Activated naive CD4-positive, alpha-beta T cell treated with anti-CD3 and anti-CD28 coated beads for 36 hours (primary cell): ENCODE measurements at regions of chr11 and their contacts with region 1.

Region 1: DNA sequence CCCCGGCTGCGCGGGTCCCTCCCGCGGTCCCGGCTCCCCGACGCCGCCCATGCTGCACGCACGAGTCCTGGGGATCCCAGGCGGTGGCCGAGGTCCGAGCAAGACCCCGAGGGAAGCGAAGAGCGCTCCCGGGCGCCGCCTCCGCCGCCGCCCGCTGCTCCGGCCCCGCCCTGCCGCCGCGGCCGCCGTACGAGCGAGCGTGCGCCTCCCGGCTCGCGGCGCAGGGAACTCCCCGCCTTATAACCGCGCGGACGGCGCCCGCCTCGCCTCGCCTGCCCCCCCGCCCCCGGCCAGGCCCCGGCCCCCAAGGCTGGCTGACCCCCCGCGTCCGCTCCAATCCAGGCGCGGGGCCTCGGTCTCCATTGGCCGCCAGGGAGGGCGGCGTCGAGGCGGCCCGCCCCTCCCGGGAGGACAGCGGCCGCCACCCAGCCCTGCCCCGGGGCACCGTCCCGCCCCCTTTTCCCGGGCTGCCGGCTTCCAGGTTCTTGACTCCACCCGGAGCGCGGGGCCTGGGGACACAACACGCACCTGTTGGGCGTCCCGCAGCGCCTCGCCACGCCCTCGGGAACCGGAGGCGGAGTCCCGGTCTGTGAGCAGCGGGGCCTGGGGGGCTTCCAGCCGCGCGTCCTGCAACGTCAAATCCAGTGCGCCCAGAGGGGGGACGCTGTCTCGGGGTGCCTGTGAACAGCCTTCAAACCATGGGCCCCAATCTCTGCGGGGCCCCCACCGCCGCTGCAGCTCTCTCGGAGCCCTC is at the start of gene FADS3:
- DNase-seq: peak; percentile 49
- H3K4me3 Mint-ChIP-seq: peak within 1 kb of the TSS; percentile 68
- H3K27ac Mint-ChIP-seq: no peak within 1 kb of the TSS
- H3K4me1 Mint-ChIP-seq: peaks cover 10% of the 10 kb centered on the region
- H3K27me3 Mint-ChIP-seq: no peaks in the 10 kb centered on the region
- total RNA-seq, gene FADS3: 4.2 to 4.3 TPM

Region 2: GRCh38 chr11:60994541-60995080 is 896.9 kb before region 1 on chr11:
- CTCF ChIA-PET with region 1: no interaction called
- intact Hi-C with region 1: no loop called
- DNase-seq: peak; percentile 74
- H3K4me3 Mint-ChIP-seq: peak overlapping the region; percentile 74
- H3K27ac Mint-ChIP-seq: peak overlapping the region; percentile 98
- H3K4me1 Mint-ChIP-seq: peaks cover 80% of the 10 kb centered on the region
- H3K27me3 Mint-ChIP-seq: no peaks in the 10 kb centered on the region

Region 3: DNA sequence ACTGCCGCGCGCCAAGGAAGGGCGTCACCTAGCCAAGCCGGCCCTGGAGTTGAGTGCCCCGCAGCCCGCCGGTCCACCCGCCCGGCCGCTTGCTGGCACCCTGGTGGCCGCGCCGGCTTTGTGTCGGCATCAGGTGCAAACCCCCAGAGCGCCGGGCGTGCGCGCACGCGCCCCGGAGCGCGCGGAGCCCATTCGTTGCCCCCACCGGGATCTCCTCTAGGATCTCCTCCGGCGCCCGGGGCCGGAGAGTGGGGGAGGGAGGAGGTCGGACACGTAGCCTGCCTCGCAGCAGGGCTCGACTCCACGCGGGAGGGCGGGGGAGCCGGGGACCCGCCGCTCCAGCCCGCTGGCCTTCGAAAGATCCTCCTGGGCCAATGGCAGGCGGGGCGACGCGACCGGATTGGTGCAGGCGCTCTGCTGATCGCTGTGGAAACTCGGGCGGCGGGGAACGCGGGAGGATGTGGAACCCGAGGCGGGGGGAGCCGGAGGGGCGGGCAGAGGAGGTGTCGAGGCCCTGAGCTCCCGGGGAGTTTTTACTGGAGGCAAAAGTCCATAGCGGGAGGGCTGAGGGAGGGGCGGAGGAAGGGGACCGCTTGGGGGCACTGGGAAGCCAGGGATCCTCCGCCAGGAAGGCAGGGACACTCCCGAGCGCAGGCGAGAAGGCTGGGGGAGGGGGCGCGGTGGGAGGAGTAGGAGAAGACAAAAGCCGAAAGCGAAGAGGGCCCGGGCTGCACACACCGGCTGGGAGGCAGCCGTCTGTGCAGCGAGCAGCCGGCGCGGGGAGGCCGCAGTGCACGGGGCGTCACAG is 63.7 kb before region 1 on chr11 and contains the start of gene FADS2:
- CTCF ChIA-PET with region 1: no interaction called
- intact Hi-C with region 1: loop called (anchors 2 kb)
- DNase-seq: peak; percentile 90
- H3K4me3 Mint-ChIP-seq: peak within 1 kb of the TSS; percentile 85
- H3K27ac Mint-ChIP-seq: peak within 1 kb of the TSS; percentile 77
- H3K4me1 Mint-ChIP-seq: peaks cover 18% of the 10 kb centered on the region
- H3K27me3 Mint-ChIP-seq: peaks cover 40% of the 10 kb centered on the region
- total RNA-seq, gene FADS2: 32.1 to 34.1 TPM

Region 4: GRCh38 chr11:61871158-61871597 is 20.3 kb before region 1 on chr11:
- CTCF ChIA-PET with region 1: interaction called, 3 read pairs
- intact Hi-C with region 1: loop called (anchors 1 kb)
- DNase-seq: peak; percentile 75
- H3K4me3 Mint-ChIP-seq: no peak overlapping the region
- H3K27ac Mint-ChIP-seq: no peak overlapping the region
- H3K4me1 Mint-ChIP-seq: peaks cover 2% of the 10 kb centered on the region
- H3K27me3 Mint-ChIP-seq: no peaks in the 10 kb centered on the region